ENCODE measurements at regions of chr2 and their contacts with region 1.

Region 1: GRCh38 chr2:44596537-44597320 is 235.0 kb downstream of the CAMKMT start:
- DNase-seq: no peak
- ATAC-seq: no peak

Region 2: GRCh38 chr2:44218771-44219170 is 378.0 kb before region 1 on chr2:
- intact Hi-C with region 1: no loop called
- DNase-seq: no peak
- ATAC-seq: no peak

Region 3: GRCh38 chr2:44649381-44649780 is 52.7 kb after region 1 on chr2:
- intact Hi-C with region 1: loop called (anchors 10 kb)
- DNase-seq: no peak
- ATAC-seq: no peak

Region 4: GRCh38 chr2:44707945-44708660 is 111.4 kb after region 1 on chr2:
- intact Hi-C with region 1: no loop called
- DNase-seq: no peak
- ATAC-seq: peak; percentile 46

Measured in Right ventricle myocardium superior (tissue), 1 donor.